Panc1 (cell line): ENCODE measurements at regions of chr1 and their contacts with region 1.

Region 1: DNA sequence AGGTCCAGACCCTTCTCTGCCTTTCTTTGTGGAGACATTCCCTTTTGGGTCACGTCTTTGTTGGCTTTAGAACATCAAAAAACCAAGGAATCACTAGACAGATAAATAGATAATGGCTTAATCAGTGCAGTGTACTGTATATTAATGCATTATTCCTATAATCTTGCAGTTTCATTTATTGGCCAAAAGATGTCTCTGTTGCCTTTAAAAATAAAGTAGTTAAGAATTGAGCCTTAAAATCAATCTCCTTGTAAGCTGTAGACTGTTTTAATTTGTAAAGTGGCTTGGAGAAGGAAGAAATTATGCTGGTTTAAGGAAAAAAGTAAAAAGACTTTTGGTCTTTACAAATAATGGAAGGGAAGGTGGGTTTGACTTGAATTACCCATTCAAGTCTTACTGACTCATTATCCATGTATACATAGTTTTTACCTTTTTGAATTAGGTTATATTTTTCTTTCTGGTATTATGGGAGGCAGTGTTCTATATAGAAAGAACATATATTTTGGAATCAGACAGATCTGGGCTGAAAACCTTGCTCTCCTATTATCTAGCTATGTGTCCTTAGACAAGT is 84.6 kb downstream of the VPS13D start:
- DNase-seq: no peak
- ATAC-seq: peak; percentile 78; the same call in 1 of the 2 replicates
- H3K4me3 ChIP-seq: no peak overlapping the region
- H3K27ac ChIP-seq: peak overlapping the region; percentile 72
- H3K4me1 ChIP-seq: peaks cover 6% of the 10 kb centered on the region
- H3K27me3 ChIP-seq: no peaks in the 10 kb centered on the region
- CTCF ChIP-seq: peak; percentile 59; the same call in 1 of the 2 replicates

Region 2: GRCh38 chr1:12649971-12650421 is 335.6 kb after region 1 on chr1:
- CTCF ChIA-PET with region 1: interaction called, 14 read pairs
- POLR2A ChIA-PET with region 1: no interaction called
- in situ Hi-C with region 1: no loop called
- intact Hi-C with region 1: no loop called
- DNase-seq: no peak
- ATAC-seq: no peak
- H3K4me3 ChIP-seq: no peak overlapping the region
- H3K27ac ChIP-seq: no peak overlapping the region
- H3K4me1 ChIP-seq: no peaks in the 10 kb centered on the region
- H3K27me3 ChIP-seq: no peaks in the 10 kb centered on the region
- CTCF ChIP-seq: no peak